PC-3 (cell line): ENCODE measurements at regions of chr6 and their contacts with region 1.

Region 1: GRCh38 chr6:31541658-31542521 is at the start of gene DDX39B:
- DNase-seq: peak; percentile 97
- ATAC-seq: peak; percentile 77
- H3K4me3 ChIP-seq: peak within 1 kb of the TSS; percentile 92
- H3K27ac ChIP-seq: peak within 1 kb of the TSS; percentile 90
- H3K4me1 ChIP-seq: peaks cover 26% of the 10 kb centered on the region
- H3K27me3 ChIP-seq: no peaks in the 10 kb centered on the region
- CTCF ChIP-seq: no peak
- total RNA-seq, gene DDX39B: 410 and 465 TPM in 2 replicates

Region 2: GRCh38 chr6:31252625-31253024 is 289.3 kb before region 1 on chr6:
- CTCF ChIA-PET with region 1: no interaction called
- POLR2A ChIA-PET with region 1: no interaction called
- intact Hi-C with region 1: no loop called
- DNase-seq: no peak
- ATAC-seq: no peak
- H3K4me3 ChIP-seq: no peak overlapping the region
- H3K27ac ChIP-seq: no peak overlapping the region
- H3K4me1 ChIP-seq: no peaks in the 10 kb centered on the region
- H3K27me3 ChIP-seq: no peaks in the 10 kb centered on the region
- CTCF ChIP-seq: no peak; the same call in 1 of the 2 replicates

Region 3: GRCh38 chr6:31525932-31526591 is 15.8 kb before region 1 on chr6:
- CTCF ChIA-PET with region 1: no interaction called
- POLR2A ChIA-PET with region 1: interaction called, 10 read pairs
- intact Hi-C with region 1: no loop called
- DNase-seq: peak; percentile 45
- ATAC-seq: peak; percentile 56
- H3K4me3 ChIP-seq: no peak overlapping the region
- H3K27ac ChIP-seq: peak overlapping the region; percentile 8; the same call in 1 of the 2 replicates
- H3K4me1 ChIP-seq: peaks cover 8% of the 10 kb centered on the region
- H3K27me3 ChIP-seq: no peaks in the 10 kb centered on the region
- CTCF ChIP-seq: no peak

Region 4: GRCh38 chr6:31619805-31620585 is 78.1 kb after region 1 on chr6:
- CTCF ChIA-PET with region 1: no interaction called
- POLR2A ChIA-PET with region 1: no interaction called
- intact Hi-C with region 1: no loop called
- DNase-seq: peak; percentile 98
- ATAC-seq: peak; percentile 88
- H3K4me3 ChIP-seq: peak overlapping the region; percentile 99
- H3K27ac ChIP-seq: peak overlapping the region; percentile 91
- H3K4me1 ChIP-seq: peaks cover 17% of the 10 kb centered on the region
- H3K27me3 ChIP-seq: no peaks in the 10 kb centered on the region
- CTCF ChIP-seq: no peak